Gastrocnemius medialis (tissue), 4 donors: ENCODE measurements at regions of chr20 and their contacts with region 1.

Region 1: DNA sequence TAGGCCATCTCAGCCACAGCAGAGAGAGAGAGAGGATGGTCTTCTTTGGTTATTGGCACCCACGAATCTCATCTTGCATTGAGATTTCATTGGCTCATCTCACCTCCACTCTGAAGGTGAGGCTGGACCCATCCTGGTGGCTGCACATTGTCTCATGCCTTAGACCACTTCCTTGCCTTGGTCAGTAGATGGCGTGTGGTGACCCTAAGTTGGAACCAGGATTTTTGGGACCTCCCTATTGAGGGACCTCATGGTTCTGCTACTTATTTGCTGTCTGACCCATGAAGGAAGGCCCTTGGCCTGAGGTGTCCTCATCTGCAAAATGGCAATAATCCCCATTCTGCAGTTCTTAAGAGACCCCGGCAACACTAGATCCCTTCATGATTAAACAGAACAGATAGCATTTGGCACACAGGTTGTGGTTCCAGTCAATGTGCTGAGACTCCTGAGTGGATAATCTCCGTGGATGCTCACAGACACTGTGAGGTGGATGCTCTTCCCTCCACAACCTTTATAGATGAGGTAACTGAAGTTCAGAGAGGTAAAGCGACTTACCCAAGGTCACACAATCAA is 21.5 kb upstream of the AAR2 start:
- DNase-seq: no peak
- ATAC-seq: peak in 1 of 2 donors; percentile 39
- H3K4me3 ChIP-seq: no peak overlapping the region
- H3K27ac ChIP-seq: no peak overlapping the region
- H3K4me1 ChIP-seq: no peaks in the 10 kb centered on the region
- H3K27me3 ChIP-seq: no peaks in the 10 kb centered on the region
- CTCF ChIP-seq: peak in 3 of 5 experiments; percentile 11 to 52 (median 38)
- POLR2A ChIP-seq: no peak

Region 2: DNA sequence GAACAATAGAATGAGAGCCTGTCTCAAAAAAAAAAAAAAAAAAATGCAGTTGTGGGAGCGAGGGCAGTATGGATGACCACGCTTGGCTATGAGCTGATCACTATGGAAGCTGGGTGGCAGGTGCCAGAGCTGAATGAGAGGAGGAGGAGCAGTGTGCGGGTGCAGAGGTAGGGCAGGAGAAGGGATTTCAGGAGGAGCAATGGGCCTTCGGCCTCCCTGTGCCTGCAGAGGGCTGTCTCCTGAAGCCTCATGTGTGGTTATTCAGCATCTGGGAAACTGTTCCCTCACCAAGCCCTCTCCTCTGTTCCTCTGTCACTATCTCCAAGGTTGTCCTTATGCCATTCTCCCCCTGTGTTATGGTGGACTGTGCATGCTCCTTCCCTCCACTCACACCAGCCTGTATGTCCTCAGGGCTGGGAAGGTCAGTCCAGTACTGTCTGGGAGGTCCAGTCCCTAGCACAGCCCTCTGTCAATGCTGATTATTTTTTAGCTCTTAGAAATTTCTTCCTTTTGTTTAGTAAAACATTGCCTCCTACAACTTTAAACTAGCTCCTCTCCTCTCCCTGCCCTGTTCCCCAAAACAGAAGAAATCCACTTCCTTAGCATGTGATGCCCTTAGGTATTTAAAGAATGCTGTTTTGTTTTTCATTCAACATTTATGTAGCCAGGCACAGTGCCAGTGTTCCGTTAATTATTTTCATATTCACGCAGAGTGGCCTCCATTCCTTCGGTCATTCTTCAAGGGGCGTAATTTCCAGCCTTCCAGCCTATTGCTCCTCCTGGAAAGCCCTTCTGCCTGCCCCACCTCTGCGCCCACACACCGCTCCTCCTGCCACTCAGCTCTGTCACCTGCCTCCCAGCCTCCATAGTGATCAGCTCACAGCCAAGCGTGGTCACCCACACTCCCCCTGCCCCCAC is 197.5 kb before region 1 on chr20:
- in situ Hi-C with region 1: no loop called
- intact Hi-C with region 1: no loop called
- DNase-seq: no peak
- ATAC-seq: no peak
- H3K4me3 ChIP-seq: no peak overlapping the region
- H3K27ac ChIP-seq: no peak overlapping the region
- H3K4me1 ChIP-seq: no peaks in the 10 kb centered on the region
- H3K27me3 ChIP-seq: no peaks in the 10 kb centered on the region
- CTCF ChIP-seq: no peak
- POLR2A ChIP-seq: no peak

Region 3: DNA sequence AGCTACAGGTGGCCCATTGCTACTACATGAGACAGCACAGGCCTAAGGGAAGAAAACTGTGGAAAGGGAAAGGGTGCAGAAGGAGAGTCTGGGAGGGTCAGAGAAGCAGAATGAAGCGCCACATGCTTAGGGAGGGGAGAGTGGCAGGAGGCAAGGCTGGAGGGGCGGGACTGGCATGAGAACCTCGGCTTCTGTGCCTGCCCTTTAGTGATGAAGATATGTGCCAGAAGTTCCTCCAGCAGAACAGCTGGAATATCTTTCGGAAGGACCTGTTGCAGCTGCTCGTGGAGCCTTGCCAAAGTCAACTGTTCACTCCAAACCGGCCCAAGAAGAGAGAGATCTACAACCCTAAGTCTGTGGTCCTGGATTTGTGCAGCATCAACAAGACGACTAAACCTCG is 184.6 kb before region 1 on chr20:
- in situ Hi-C with region 1: no loop called
- intact Hi-C with region 1: no loop called
- DNase-seq: no peak
- ATAC-seq: no peak
- H3K4me3 ChIP-seq: no peak overlapping the region
- H3K27ac ChIP-seq: no peak overlapping the region
- H3K4me1 ChIP-seq: no peaks in the 10 kb centered on the region
- H3K27me3 ChIP-seq: no peaks in the 10 kb centered on the region
- CTCF ChIP-seq: no peak
- POLR2A ChIP-seq: no peak

Region 4: GRCh38 chr20:36043892-36044515 is 170.8 kb before region 1 on chr20:
- in situ Hi-C with region 1: no loop called
- intact Hi-C with region 1: no loop called
- DNase-seq: no peak
- ATAC-seq: no peak
- H3K4me3 ChIP-seq: no peak overlapping the region
- H3K27ac ChIP-seq: no peak overlapping the region
- H3K4me1 ChIP-seq: peaks cover 27 to 32% of the 10 kb centered on the region in 2 donors
- H3K27me3 ChIP-seq: no peaks in the 10 kb centered on the region
- CTCF ChIP-seq: no peak
- POLR2A ChIP-seq: no peak

Region 5: GRCh38 chr20:36439040-36439730 is 224.4 kb after region 1 on chr20:
- in situ Hi-C with region 1: loop called in 3 of 4 experiments (anchors 5 to 10 kb)
- intact Hi-C with region 1: loop called (anchors 1 kb)
- DNase-seq: peak in 1 of 2 donors; percentile 57
- ATAC-seq: peak; percentile 61 to 70
- H3K4me3 ChIP-seq: no peak overlapping the region
- H3K27ac ChIP-seq: no peak overlapping the region
- H3K4me1 ChIP-seq: no peaks in the 10 kb centered on the region
- H3K27me3 ChIP-seq: peaks cover 0 to 8% (median 0%) of the 10 kb centered on the region in 3 donors
- CTCF ChIP-seq: peak; percentile 76 to 90 (median 87)
- POLR2A ChIP-seq: no peak